Heart right ventricle (tissue), 16 donors: ENCODE measurements at regions of chr3 and their contacts with region 1.

Region 1: GRCh38 chr3:188947401-188948280 is 224.1 kb upstream of the TPRG1 start:
- DNase-seq: peak; percentile 91 to 97
- ATAC-seq: peak; percentile 88 to 95 (median 93)
- H3K4me3 ChIP-seq: peak overlapping the region in 9 of 10 donors; percentile 27 to 56 (median 52)
- H3K27ac ChIP-seq: peak overlapping the region; percentile 88 to 99 (median 97)
- H3K4me1 ChIP-seq: peaks cover 22 to 95% (median 45%) of the 10 kb centered on the region in 9 donors
- H3K27me3 ChIP-seq: no peaks in the 10 kb centered on the region
- CTCF ChIP-seq: peak in 8 of 9 donors; percentile 22 to 57 (median 36)

Region 2: DNA sequence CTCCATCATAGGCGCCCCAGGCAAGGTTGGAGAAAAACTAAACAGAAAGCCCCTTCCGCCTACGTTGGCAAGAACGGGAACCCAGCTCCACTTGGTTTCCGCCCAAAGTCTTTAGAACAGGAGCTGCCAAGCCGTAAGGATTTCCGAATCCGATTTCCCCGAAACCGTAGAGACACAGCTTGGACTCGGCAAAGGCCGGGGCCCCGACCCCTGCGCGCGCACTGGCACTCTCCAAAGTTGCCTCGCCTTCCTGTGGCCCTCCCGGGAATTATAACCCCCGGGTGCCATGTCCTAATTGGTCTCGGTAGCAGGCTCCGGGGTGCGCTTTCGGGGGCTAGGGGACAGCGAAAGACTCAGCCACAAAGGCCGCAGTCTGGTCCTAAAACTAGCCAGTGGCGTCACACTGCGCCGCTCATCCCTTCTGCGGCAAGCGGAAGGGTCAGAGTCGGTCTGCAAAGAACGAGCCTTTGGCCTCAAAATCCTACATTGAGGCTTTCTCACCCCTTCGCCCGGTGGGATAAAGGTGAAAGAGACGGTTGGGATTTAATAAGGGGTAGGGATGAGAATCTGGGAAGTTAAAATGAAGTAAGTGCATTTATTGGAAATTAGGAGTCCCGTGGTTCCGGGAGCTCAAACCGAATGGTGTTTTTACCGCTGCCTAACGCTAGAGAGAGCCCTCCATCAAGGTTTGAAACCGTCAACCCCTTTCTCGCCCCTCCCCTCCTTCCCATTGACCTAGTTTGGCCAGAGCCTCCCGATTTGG is 1209.1 kb before region 1 on chr3:
- intact Hi-C with region 1: loop called in 4 of 10 experiments (anchors 1 to 5 kb)
- DNase-seq: peak; percentile 75 to 97
- ATAC-seq: peak; percentile 60 to 82 (median 75)
- H3K4me3 ChIP-seq: peak overlapping the region; percentile 46 to 95 (median 73)
- H3K27ac ChIP-seq: peak overlapping the region; percentile 85 to 100 (median 99)
- H3K4me1 ChIP-seq: peaks cover 4 to 72% (median 38%) of the 10 kb centered on the region in 9 donors
- H3K27me3 ChIP-seq: no peaks in the 10 kb centered on the region
- CTCF ChIP-seq: peak; percentile 32 to 86 (median 73)

Region 3: DNA sequence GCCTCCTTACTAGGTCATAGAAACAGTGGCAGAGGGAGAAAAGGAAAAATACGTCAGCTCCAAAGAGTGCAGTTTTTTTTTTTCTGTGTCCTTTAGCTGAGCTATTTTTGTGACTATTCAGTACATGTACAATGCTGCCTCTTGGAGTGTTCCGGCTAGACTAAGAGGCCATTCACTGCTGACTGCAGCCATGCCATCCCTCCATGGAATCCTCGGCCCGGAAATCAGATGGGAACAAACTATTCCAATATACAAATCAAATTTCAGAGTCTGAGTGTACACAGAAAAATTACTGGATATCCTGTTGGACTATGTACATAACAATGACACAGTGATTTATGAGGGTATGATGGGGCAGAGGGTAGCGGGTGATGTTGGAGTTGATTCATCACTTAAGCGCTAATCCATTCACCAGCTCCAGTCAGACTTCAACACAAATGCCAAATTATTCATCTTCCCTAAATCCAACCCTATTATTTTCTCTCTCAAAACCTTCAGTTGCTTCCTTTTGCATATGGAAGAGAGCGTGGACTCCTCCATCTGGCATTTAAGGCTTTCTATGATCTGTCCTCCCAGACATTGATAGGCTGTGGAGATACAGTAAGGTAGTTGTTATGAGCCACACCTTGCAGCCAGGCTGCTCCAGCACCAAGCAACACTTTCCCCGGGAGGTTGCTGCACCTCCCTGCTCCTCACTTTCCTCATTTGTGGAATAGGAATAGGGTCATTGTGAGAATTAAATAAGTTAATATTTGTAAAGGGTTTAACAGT is 684.5 kb before region 1 on chr3:
- intact Hi-C with region 1: loop called in 3 of 10 experiments (anchors 2 to 10 kb)
- DNase-seq: peak in 1 of 2 donors; percentile 62
- ATAC-seq: peak; percentile 50 to 89 (median 84)
- H3K4me3 ChIP-seq: no peak overlapping the region
- H3K27ac ChIP-seq: peak overlapping the region; percentile 73 to 93 (median 86)
- H3K4me1 ChIP-seq: peaks cover 26 to 98% (median 74%) of the 10 kb centered on the region in 9 donors
- H3K27me3 ChIP-seq: no peaks in the 10 kb centered on the region
- CTCF ChIP-seq: no peak

Region 4: DNA sequence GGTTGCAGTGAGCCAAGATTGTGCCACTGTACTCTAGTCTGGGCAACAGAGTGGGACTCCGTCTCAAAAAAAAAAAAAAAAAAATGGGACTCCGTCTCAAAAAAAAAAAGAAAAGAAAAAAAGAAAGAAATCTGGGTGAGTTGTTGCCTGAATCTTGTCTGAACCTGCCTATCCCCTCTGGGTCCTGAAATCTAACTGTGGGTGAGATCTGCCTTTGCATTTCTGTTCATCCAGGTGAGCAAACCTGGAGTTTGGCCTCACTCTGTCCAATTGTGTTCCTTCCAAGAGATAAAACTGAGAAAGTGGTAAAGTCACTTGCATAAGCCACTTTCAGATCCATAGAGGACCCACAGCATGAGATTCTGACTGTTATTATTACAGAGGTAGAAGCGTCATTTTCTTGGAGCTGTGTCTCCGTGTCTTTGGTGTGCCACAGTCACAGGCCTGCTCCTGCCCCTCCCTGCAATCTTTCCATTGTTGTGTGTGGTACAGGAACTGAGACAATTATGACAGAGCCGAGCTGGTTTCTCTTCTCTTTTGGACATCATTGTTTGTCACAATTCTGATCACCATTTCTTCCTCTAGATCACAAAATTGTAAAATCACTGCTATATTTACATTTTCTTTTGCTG is 557.8 kb before region 1 on chr3:
- intact Hi-C with region 1: loop called in 1 of 10 experiments (anchors 10 kb)
- DNase-seq: peak in 1 of 2 donors; percentile 56
- ATAC-seq: peak; percentile 78 to 93 (median 89)
- H3K4me3 ChIP-seq: no peak overlapping the region
- H3K27ac ChIP-seq: peak overlapping the region in 7 of 10 donors; percentile 36 to 67 (median 62)
- H3K4me1 ChIP-seq: peaks cover 0 to 45% (median 37%) of the 10 kb centered on the region in 9 donors
- H3K27me3 ChIP-seq: no peaks in the 10 kb centered on the region
- CTCF ChIP-seq: no peak

Region 5: DNA sequence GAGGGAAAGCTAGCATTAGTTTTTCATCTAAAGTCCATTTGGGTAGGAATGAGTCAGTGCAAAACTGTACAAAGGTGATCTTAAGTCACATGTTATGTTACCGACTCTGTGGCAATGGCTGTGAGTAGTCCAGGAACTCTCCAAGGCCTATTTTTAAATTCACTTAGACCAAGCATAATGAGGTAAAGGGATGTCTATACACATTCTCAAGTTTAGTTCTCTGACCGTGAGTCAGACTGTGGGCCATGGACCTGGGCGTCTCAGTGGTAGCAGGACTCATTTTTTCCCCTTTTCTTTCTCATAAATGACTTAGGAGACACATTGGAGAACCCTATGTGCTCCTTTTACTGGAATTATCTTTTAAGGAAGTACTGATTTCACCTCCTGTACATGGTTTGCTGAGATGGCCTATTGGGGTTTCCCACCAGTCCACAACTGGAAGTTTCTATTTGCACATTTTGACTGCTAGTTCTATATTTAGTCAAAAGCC is 264.6 kb before region 1 on chr3:
- intact Hi-C with region 1: loop called in 1 of 10 experiments (anchors 10 kb)
- DNase-seq: peak in 1 of 2 donors; percentile 19
- ATAC-seq: peak; percentile 48 to 94 (median 86)
- H3K4me3 ChIP-seq: no peak overlapping the region
- H3K27ac ChIP-seq: peak overlapping the region; percentile 34 to 84 (median 70)
- H3K4me1 ChIP-seq: peaks cover 0 to 84% (median 70%) of the 10 kb centered on the region in 9 donors
- H3K27me3 ChIP-seq: no peaks in the 10 kb centered on the region
- CTCF ChIP-seq: no peak

Region 6: GRCh38 chr3:188915127-188915526 is 32.5 kb before region 1 on chr3:
- intact Hi-C with region 1: loop called in 1 of 10 experiments (anchors 1 kb)
- DNase-seq: no peak
- ATAC-seq: no peak
- H3K4me3 ChIP-seq: no peak overlapping the region
- H3K27ac ChIP-seq: peak overlapping the region in 1 of 10 donors; percentile 64
- H3K4me1 ChIP-seq: peaks cover 0 to 57% (median 12%) of the 10 kb centered on the region in 9 donors
- H3K27me3 ChIP-seq: peaks cover 0 to 1% (median 0%) of the 10 kb centered on the region in 7 donors
- CTCF ChIP-seq: no peak